CD8-positive, alpha-beta memory T cell (primary cell): ENCODE measurements at regions of chr11 and their contacts with region 1.

Region 1: DNA sequence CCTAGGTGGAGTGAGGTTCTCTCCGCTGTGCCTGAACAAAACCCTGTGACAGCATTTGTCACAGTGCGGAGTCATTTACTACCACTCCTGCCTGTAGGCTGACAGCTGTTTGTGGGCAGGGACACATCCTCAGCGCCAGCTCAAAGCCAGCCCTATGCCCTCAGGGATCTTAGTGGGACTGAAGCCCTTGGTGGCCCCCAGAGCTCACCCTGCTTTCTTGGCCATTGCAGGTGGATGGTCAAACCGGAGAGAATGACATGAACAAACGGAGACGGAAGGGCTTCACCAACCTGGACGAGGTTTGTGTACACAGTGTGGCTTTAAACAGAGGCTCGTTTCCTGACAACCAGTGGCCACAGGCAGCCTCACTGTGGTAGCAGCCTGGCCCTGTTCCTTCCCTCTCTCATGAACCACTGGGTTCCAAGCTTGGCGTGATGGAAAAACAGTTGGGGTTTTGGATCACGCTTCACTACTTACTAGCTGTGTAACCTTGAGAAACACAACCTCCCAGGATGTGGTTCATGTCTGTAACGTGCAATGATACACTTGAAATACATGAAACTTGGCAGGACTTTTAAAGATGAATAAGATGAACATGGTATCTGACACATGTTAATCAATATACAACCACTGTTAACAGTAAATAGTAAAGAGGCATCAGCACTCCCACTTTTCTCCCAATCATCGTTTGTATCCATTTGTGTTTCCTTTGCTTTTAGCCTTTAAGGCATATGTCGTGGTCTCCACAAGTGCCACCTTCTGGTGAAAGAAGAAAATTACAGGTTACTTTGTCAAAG is 125.8 kb downstream of the MICAL2 start:
- DNase-seq: peak; percentile 10 to 78 (median 67)
- H3K4me3 ChIP-seq: peak overlapping the region; percentile 56
- H3K4me3 Mint-ChIP-seq: peak overlapping the region; percentile 9 to 78 (median 73)
- H3K27ac ChIP-seq: peak overlapping the region; percentile 71
- H3K27ac Mint-ChIP-seq: peak overlapping the region; percentile 78 to 99 (median 96)
- H3K4me1 ChIP-seq: peaks cover 18% of the 10 kb centered on the region
- H3K4me1 Mint-ChIP-seq: peaks cover 25 to 30% (median 29%) of the 10 kb centered on the region in 3 donors
- H3K27me3 ChIP-seq: no peaks in the 10 kb centered on the region
- H3K27me3 Mint-ChIP-seq: no peaks in the 10 kb centered on the region

Region 2: DNA sequence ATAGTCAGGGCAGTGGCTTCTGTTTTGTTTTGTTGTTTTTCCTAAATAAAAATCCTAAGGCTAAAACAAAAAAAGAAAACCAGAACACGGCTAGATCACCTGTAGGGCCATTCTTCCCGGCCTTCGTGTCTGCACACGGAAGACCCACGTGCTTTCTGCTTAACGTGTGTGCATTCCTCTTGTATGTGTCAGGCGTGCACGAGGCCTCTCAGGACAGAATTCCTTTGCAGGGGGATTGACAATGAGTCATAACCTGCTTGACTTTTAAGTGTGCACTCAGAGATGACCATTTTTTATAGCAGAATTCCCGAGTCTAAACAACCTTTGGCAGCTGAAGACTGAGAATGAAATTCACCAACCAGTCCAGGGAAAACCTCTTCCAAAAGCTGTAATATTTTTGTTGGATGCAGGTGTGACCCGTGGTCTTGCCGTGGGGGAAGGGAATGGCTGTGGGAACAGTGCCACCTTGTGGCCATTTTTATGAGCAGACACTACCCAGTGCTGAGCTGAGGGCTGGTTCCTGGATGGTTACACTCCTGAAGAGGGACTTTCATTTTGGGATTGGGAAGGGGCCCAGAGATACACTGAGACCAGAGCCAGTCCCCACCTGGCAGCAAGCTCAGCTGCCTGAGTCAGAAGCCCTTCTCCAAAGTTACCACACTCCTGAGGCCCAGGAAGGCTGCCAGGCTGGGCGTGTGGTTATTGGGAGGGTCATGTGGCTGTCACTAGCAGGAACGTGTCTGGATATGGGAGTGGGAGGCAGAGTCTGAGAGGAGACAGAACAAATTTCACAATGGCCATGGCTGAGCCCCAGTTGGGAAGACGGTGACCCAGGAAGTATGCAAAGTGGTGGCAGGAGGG is 192.0 kb before region 1 on chr11:
- CTCF ChIA-PET with region 1: interaction called, 81 read pairs
- POLR2A ChIA-PET with region 1: no interaction called
- DNase-seq: peak; percentile 43 to 74 (median 51)
- H3K4me3 ChIP-seq: no peak overlapping the region
- H3K4me3 Mint-ChIP-seq: no peak overlapping the region
- H3K27ac ChIP-seq: no peak overlapping the region
- H3K27ac Mint-ChIP-seq: no peak overlapping the region
- H3K4me1 ChIP-seq: peaks cover 4% of the 10 kb centered on the region
- H3K4me1 Mint-ChIP-seq: peaks cover 3 to 5% (median 4%) of the 10 kb centered on the region in 3 donors
- H3K27me3 ChIP-seq: no peaks in the 10 kb centered on the region
- H3K27me3 Mint-ChIP-seq: peaks cover 0 to 10% of the 10 kb centered on the region in 2 donors

Region 3: DNA sequence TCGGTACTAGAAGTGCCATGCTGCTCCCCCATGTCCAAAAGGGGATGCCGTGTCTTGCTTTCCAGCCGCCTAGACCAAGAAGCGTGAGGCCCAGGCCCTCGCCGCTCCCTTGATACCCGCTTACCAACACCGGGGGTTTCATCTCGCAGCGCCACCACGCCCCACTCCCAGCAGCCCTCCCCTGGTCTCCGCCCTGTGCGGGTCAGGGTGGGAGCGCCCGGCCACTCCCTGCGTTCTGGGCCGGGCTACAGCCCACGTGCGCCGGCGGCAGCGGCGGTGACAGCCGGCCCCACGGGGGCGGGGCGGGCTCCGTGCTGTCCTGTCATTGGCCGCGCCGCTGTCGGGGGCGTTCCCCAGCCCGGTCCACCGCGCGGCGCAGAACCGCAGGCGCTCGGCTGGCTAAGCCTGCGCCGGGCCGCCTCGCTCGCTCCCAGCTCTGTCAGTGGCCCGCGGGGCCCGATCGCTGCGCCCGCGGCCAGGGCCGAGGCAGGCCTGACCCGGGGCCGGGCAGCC is 125.9 kb before region 1 on chr11 and contains the start of gene MICAL2:
- CTCF ChIA-PET with region 1: interaction called, 13 read pairs
- POLR2A ChIA-PET with region 1: no interaction called
- DNase-seq: peak; percentile 79 to 86 (median 84)
- H3K4me3 ChIP-seq: peak within 1 kb of the TSS; percentile 68
- H3K4me3 Mint-ChIP-seq: peak within 1 kb of the TSS; percentile 79 to 93 (median 84)
- H3K27ac ChIP-seq: peak within 1 kb of the TSS; percentile 24
- H3K27ac Mint-ChIP-seq: peak within 1 kb of the TSS; percentile 34 to 89 (median 72)
- H3K4me1 ChIP-seq: peaks cover 17% of the 10 kb centered on the region
- H3K4me1 Mint-ChIP-seq: peaks cover 22 to 50% (median 40%) of the 10 kb centered on the region in 3 donors
- H3K27me3 ChIP-seq: no peaks in the 10 kb centered on the region
- H3K27me3 Mint-ChIP-seq: no peaks in the 10 kb centered on the region
- total RNA-seq, gene MICAL2: 146 to 147 TPM

Region 4: DNA sequence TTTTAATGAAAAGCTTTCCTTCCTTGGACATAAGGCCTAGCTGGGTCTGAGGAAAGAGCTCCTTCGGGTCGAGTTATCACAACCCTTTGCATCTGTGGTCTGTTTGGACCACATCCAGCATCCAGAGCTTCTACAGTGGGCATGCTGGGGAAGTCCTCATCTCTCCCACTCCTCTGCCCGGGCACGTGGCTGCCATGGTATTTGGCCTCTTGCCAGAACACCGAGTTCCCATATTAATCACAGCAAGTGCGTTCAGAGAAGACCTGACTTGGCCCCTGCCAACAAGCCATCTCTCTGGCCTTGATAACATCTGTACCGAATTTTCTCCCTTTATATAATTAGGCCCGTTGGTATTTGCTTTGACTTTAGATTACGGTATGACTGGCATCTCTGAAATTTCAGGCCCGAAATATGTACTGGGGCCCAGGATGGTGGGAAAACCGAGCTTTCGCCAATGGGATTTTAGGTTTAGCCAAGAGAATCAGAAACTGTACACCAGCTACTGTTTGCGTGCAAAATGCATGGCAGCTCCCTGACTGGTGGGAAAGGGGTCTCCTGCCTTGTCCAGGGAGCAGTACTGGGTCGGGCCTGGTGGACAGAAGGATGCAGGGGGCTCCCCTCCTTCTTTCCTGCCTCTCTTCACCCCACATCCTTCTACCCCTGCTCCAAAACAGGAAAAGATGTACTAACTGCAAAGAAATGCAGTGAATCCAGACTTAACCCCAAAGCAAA is 35.7 kb before region 1 on chr11:
- CTCF ChIA-PET with region 1: interaction called, 23 read pairs
- POLR2A ChIA-PET with region 1: interaction called, 3 read pairs
- DNase-seq: no peak
- H3K4me3 ChIP-seq: no peak overlapping the region
- H3K4me3 Mint-ChIP-seq: peak overlapping the region in 2 of 7 donors; percentile 33 to 92
- H3K27ac ChIP-seq: peak overlapping the region; percentile 62
- H3K27ac Mint-ChIP-seq: peak overlapping the region; percentile 30 to 99 (median 92)
- H3K4me1 ChIP-seq: peaks cover 53% of the 10 kb centered on the region
- H3K4me1 Mint-ChIP-seq: peaks cover 56 to 70% (median 65%) of the 10 kb centered on the region in 3 donors
- H3K27me3 ChIP-seq: no peaks in the 10 kb centered on the region
- H3K27me3 Mint-ChIP-seq: peaks cover 0 to 1% of the 10 kb centered on the region in 2 donors

Region 5: DNA sequence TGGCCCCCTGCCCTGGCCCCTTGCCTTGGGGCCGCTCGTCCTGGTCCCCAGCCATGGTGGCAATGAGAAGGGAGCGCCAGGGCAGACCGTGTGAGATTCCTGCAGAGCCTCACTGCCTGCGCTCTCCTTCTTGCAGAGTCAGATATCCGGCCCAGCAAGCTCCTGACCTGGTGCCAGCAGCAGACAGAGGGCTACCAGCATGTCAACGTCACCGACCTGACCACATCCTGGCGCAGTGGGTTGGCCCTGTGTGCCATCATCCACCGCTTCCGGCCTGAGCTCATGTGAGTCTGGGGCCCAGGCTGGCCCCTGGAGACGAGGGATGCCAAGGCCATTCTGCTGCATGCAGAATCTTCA is 11.6 kb before region 1 on chr11:
- CTCF ChIA-PET with region 1: interaction called, 64 read pairs
- POLR2A ChIA-PET with region 1: interaction called, 15 read pairs
- DNase-seq: peak; percentile 84 to 96 (median 86)
- H3K4me3 ChIP-seq: peak overlapping the region; percentile 28
- H3K4me3 Mint-ChIP-seq: peak overlapping the region; percentile 74 to 89 (median 81)
- H3K27ac ChIP-seq: peak overlapping the region; percentile 72
- H3K27ac Mint-ChIP-seq: peak overlapping the region; percentile 94 to 100 (median 98)
- H3K4me1 ChIP-seq: peaks cover 47% of the 10 kb centered on the region
- H3K4me1 Mint-ChIP-seq: peaks cover 47 to 61% (median 53%) of the 10 kb centered on the region in 3 donors
- H3K27me3 ChIP-seq: no peaks in the 10 kb centered on the region
- H3K27me3 Mint-ChIP-seq: peaks cover 0 to 5% of the 10 kb centered on the region in 2 donors